ENCODE measurements at regions of chr19 and their contacts with region 1.

Region 1: GRCh38 chr19:5953680-5954213 is 24.2 kb downstream of the RANBP3 start:
- DNase-seq: peak; percentile 47
- H3K4me3 Mint-ChIP-seq: peak overlapping the region; percentile 62
- H3K27ac Mint-ChIP-seq: peak overlapping the region; percentile 92
- H3K4me1 Mint-ChIP-seq: peaks cover 85% of the 10 kb centered on the region
- H3K27me3 Mint-ChIP-seq: no peaks in the 10 kb centered on the region

Region 2: DNA sequence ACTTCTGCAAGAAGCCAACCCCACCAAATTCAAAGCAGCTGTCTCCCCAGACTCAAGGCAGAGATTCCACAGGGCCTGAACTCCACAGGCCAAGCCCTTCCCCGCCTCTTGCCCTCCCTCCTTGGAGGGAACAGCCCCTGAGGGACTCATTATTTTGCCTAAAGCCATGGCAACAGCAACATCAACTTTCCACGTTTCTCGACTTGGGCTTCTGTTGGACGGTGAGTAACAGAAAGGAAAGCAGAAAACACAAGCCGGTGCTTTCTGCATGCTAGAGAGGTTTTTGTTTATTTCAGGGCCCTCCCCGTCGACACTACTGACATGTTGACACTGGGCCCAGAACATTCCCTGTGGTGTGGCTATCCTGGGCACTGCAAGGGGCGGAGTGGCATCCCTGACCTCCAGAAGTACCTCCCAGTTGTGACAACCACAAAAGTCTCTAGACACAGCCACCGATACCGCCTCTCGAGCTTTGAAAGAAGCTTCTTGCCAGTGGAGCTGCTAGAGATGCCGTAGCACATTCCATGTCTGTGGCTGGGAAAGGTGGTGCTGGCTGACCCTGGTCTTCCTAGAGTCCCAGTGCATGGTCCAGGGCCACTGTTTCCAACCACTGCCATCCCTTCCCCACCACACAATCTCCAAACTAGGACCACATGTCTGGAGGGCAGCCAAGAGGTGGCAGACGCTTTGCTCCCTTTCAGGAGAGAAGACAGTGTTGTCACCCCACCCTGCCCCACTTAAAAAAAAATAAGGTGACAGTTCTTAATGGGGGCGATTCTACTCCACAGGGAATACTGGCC is 26.9 kb before region 1 on chr19:
- CTCF ChIA-PET with region 1: no interaction called
- POLR2A ChIA-PET with region 1: no interaction called
- DNase-seq: no peak
- H3K4me3 Mint-ChIP-seq: no peak overlapping the region
- H3K27ac Mint-ChIP-seq: no peak overlapping the region
- H3K4me1 Mint-ChIP-seq: no peaks in the 10 kb centered on the region
- H3K27me3 Mint-ChIP-seq: no peaks in the 10 kb centered on the region

Region 3: GRCh38 chr19:5967994-5968430 is 14.3 kb after region 1 on chr19:
- CTCF ChIA-PET with region 1: interaction called, 20 read pairs
- POLR2A ChIA-PET with region 1: interaction called, 10 read pairs
- DNase-seq: peak; percentile 66
- H3K4me3 Mint-ChIP-seq: no peak overlapping the region
- H3K27ac Mint-ChIP-seq: peak overlapping the region; percentile 76
- H3K4me1 Mint-ChIP-seq: peaks cover 69% of the 10 kb centered on the region
- H3K27me3 Mint-ChIP-seq: no peaks in the 10 kb centered on the region

Region 4: DNA sequence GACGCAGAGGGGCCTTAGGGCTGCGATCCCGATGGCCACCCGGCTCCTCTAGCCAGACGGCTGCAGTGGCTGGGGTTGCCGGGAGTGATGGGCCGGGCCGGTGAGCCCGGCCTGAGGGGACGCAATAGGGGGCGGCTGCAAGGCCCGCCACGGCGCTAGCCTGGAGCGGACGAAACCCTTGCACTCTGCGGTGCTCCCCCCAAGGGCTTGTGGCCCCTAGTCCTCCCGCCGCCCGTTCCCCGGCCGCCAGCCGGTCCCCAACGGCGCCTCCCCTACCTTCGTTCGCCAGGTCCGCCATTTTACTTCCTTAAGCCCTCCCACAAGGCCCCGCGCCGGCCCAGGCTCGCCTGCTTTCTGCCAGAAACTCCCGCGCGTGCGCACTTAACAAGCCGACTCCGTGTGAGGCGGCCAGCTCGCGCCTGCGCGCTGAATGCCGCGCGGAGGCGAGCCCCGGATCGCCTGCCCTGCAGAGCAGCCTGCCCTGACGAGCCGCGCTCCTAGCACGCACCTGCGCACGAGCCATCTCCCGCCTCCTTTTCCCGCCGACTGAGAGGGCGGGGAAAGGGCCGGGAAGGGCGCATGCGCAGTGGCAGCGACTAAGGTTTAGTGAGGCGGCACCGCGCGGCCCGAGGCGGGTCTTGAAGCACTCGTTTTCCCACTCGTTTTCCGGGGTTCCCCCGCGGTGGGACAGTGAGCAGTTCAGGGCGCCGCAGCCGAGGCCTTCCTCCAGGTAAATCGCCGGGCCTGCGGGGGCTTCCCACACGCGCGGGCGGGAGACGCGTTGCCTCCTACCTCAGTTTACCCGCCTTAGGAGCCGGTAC is 24.2 kb after region 1 on chr19 and contains the start of gene RANBP3:
- CTCF ChIA-PET with region 1: interaction called, 3 read pairs
- POLR2A ChIA-PET with region 1: interaction called, 25 read pairs
- DNase-seq: peak; percentile 99
- H3K4me3 Mint-ChIP-seq: peak within 1 kb of the TSS; percentile 96
- H3K27ac Mint-ChIP-seq: peak within 1 kb of the TSS; percentile 89
- H3K4me1 Mint-ChIP-seq: peaks cover 64% of the 10 kb centered on the region
- H3K27me3 Mint-ChIP-seq: no peaks in the 10 kb centered on the region
- total RNA-seq, gene RANBP3: 78.1 to 85.1 TPM